AG04450 (cell line): ENCODE measurements at regions of chr19 and their contacts with region 1.

Region 1: GRCh38 chr19:58558623-58559274 is 338 bp upstream of the UBE2M start:
- DNase-seq: peak; percentile 97
- H3K4me3 ChIP-seq: peak overlapping the region; percentile 95
- H3K27ac ChIP-seq: peak overlapping the region; percentile 99
- H3K27me3 ChIP-seq: peaks cover 1% of the 10 kb centered on the region
- CTCF ChIP-seq: no peak

Region 2: GRCh38 chr19:58317476-58318072 is 241.2 kb before region 1 on chr19:
- CTCF ChIA-PET with region 1: no interaction called
- POLR2A ChIA-PET with region 1: no interaction called
- DNase-seq: no peak
- H3K4me3 ChIP-seq: no peak overlapping the region
- H3K27ac ChIP-seq: no peak overlapping the region
- H3K27me3 ChIP-seq: no peaks in the 10 kb centered on the region
- CTCF ChIP-seq: no peak

Region 3: GRCh38 chr19:58482372-58482771 is 76.4 kb before region 1 on chr19:
- CTCF ChIA-PET with region 1: no interaction called
- POLR2A ChIA-PET with region 1: interaction called, 10 read pairs
- DNase-seq: no peak
- H3K4me3 ChIP-seq: no peak overlapping the region
- H3K27ac ChIP-seq: no peak overlapping the region
- H3K27me3 ChIP-seq: no peaks in the 10 kb centered on the region
- CTCF ChIP-seq: no peak

Region 4: DNA sequence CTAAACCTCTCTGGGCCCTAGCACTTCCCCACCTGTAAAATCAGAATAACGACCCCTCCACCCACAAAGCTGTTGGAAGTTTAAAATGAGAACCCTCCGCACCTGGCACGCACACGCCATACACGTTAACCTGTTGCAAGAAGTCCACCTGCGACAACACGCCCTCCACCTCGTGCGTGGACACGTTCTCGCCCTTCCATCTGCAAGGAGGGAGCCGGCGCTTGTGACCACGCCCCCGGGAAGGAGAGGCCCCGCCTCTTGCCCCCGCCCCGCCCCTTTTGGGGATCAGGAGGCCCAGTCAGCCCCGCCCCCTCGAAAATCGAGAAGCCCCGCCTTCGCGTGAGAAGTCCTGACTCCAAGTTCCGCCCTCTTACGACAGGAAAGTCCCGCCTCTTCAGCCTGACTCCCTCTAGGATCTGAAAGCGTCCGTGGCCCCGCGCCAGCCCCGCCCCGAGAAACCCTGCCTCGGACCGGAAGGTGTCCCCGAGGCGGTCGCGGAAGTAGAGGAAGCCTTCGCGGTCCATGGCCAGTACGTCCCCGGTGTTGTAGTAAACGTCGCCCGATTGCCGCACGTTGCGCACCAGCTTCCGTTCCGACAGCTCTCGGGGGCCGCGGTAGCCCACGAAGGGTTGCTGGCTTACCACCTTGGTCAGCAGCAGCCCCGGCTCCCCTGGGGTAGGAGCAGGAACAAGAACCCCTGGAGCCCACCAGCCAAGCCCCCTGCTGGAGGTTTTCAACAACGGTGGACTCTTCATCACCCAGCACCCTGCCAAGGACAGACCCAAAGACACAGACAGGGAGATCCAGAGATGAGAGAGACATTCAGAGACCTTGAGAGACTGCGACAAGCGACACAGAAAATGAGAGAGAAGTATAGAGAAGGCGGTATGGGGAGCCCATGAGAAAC is 59.5 kb before region 1 on chr19:
- CTCF ChIA-PET with region 1: no interaction called
- POLR2A ChIA-PET with region 1: no interaction called
- DNase-seq: peak; percentile 96
- H3K4me3 ChIP-seq: peak overlapping the region; percentile 70
- H3K27ac ChIP-seq: peak overlapping the region; percentile 70
- H3K27me3 ChIP-seq: no peaks in the 10 kb centered on the region
- CTCF ChIP-seq: peak; percentile 50; the same call in 1 of the 2 replicates

Region 5: DNA sequence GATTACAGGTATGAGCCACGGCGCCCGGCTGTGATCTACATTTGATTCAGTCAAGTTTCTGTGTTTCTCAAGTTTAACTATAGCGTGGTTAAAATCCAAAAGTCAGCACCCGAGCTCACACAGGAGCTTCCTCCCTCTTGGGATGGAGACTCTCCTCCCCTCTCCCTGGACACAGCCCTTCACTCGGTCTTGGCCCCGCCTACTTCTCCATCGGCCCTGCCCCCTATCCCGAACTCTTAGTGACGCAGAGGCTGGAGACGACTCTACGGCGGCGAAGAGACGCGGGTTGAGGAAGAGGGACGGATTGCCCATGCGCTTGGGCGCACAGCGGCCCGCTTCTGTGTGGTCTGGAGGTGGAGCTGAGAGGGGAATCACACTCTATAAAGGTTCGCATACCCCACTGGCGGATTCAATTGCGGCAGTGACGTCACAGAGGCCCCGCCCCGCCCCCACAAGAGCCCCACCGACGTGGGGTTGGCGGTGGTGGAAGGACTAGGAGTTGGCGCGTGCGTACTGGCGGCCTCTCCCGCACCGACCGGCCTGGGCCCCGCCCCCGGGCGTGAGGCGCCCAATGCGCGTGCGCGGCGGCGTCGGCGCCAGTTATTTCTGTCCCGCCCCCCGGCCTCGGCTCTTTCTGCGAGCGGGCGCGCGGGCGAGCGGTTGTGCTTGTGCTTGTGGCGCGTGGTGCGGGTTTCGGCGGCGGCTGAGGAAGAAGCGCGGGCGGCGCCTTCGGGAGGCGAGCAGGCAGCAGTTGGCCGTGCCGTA is 14.7 kb before region 1 on chr19 and contains the start of gene TRIM28:
- CTCF ChIA-PET with region 1: no interaction called
- POLR2A ChIA-PET with region 1: interaction called, 47 read pairs
- DNase-seq: peak; percentile 99
- H3K4me3 ChIP-seq: peak within 1 kb of the TSS; percentile 84
- H3K27ac ChIP-seq: peak within 1 kb of the TSS; percentile 97
- H3K27me3 ChIP-seq: peaks cover 6% of the 10 kb centered on the region
- CTCF ChIP-seq: no peak
- polyA plus RNA-seq, gene TRIM28: 313 and 413 TPM in 2 replicates

Region 6: GRCh38 chr19:58572818-58573657 is 14.3 kb after region 1 on chr19 and contains the start of gene MZF1:
- CTCF ChIA-PET with region 1: no interaction called
- POLR2A ChIA-PET with region 1: interaction called, 12 read pairs
- DNase-seq: peak; percentile 100
- H3K4me3 ChIP-seq: peak within 1 kb of the TSS; percentile 96
- H3K27ac ChIP-seq: peak within 1 kb of the TSS; percentile 94
- H3K27me3 ChIP-seq: no peaks in the 10 kb centered on the region
- CTCF ChIP-seq: 0 out of 2 replicates have a peak, but pooled peaks have one; percentile 25
- polyA plus RNA-seq, gene MZF1: 5.5 and 6.2 TPM in 2 replicates